AG04449 (cell line): ENCODE measurements at regions of chr11 and their contacts with region 1.

Region 1: DNA sequence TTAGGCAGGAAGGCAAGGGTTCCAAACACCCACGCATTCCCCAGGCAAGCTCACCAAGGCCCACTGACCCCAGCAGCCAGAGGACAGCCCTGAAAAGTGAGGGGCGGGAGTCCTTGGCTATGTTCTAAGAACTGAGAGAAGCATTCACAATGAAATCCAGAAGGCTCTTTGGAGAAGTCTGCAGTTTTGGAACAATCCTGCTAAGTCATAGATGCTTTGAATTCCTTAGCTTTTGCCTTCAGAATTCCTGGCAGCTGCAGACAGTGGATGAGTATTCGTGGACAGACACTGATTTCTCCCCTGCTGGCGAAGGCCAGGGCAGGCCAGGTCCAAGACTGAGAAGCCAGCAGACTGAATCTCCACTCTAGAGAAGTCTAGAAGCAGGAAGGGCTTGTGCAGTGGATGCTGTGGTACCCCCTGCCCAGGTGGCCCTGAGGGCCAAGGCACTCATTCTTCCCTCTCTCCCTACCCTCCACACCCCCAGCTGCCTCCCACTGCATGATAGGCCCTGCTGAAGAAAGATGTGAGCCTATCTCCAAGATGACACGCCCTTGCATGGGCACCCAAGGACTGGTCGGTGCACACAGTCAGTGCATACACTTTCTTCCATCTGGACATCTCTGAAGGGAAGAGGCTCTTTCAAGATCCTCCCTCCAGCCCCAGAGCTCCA is 133.2 kb upstream of the TEAD1 start:
- DNase-seq: peak; percentile 83
- H3K4me3 ChIP-seq: no peak overlapping the region
- CTCF ChIP-seq: peak; percentile 65

Region 2: GRCh38 chr11:12552692-12553091 is 11.6 kb after region 1 on chr11:
- CTCF ChIA-PET with region 1: interaction called, 18 read pairs
- POLR2A ChIA-PET with region 1: interaction called, 6 read pairs
- DNase-seq: peak; percentile 84
- H3K4me3 ChIP-seq: no peak overlapping the region
- CTCF ChIP-seq: no peak